Motor neuron (in vitro differentiated cells): ENCODE measurements at regions of chr14 and their contacts with region 1.

Region 1: GRCh38 chr14:61456720-61457119 is 135.3 kb downstream of the PRKCH start:
- ATAC-seq: peak in 7 of 8 experiments; percentile 38 to 94 (median 53)
- H3K4me3 ChIP-seq: no peak overlapping the region
- H3K27ac ChIP-seq: no peak overlapping the region
- H3K4me1 ChIP-seq: no peaks in the 10 kb centered on the region

Region 2: GRCh38 chr14:61308198-61308597 is 148.5 kb before region 1 on chr14:
- in situ Hi-C with region 1: loop called in 2 of 9 experiments (anchors 10 kb)
- ATAC-seq: no peak
- H3K4me3 ChIP-seq: no peak overlapping the region
- H3K27ac ChIP-seq: no peak overlapping the region
- H3K4me1 ChIP-seq: no peaks in the 10 kb centered on the region

Region 3: DNA sequence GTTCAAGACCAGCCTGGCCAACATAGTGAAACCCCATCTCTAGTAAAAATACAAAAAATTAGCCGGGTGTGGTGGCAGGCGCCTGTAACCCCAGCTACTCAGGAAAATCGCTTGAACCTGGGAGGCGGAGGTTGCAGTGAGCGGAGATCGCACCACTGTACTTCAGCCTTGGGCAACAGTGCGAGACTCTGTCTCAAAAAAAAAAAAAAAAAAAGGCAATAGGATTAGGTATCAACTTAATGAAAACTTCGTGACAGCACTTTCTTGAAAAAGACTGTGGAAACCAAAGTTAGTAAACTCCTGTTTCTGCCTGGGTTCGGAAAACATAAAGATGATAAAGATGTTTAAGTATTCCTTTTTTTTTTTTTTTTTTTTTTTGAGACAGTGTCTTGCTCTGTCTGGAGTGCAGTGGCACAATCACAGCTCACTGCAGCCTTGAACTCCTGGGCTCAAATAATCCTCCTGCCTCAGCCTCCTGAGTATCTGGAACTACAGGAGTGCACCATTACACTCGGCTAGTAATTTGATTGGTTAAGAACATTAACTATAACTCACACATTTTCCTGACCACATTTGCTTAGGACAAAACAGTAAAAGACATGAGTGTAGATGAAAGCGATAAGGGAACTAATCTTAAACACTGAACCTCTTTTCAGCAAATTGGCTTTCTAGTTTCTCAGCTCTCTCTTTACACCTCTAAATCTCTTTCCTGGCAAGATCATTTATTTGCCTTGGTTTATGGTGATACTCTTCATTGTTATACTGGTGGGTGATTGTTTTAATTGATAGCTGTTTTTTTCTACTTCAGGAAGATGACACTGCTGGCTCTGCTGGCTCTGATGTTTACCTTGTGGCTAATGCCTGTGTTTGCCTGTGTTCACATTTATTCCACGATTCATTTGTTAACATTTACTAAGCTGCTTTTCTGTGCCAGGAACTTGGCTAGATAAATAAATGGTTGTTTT is 254.4 kb after region 1 on chr14:
- in situ Hi-C with region 1: loop called in 1 of 9 experiments (anchors 25 kb)
- ATAC-seq: peak in 3 of 8 experiments; percentile 26 to 91 (median 44)
- H3K4me3 ChIP-seq: no peak overlapping the region
- H3K27ac ChIP-seq: no peak overlapping the region
- H3K4me1 ChIP-seq: peaks cover 0 to 5% of the 10 kb centered on the region in 2 donors

Region 4: GRCh38 chr14:61730756-61731373 is 274.1 kb after region 1 on chr14:
- in situ Hi-C with region 1: loop called in 5 of 9 experiments (anchors 25 kb)
- ATAC-seq: no peak
- H3K4me3 ChIP-seq: no peak overlapping the region
- H3K27ac ChIP-seq: no peak overlapping the region
- H3K4me1 ChIP-seq: no peaks in the 10 kb centered on the region

Region 5: DNA sequence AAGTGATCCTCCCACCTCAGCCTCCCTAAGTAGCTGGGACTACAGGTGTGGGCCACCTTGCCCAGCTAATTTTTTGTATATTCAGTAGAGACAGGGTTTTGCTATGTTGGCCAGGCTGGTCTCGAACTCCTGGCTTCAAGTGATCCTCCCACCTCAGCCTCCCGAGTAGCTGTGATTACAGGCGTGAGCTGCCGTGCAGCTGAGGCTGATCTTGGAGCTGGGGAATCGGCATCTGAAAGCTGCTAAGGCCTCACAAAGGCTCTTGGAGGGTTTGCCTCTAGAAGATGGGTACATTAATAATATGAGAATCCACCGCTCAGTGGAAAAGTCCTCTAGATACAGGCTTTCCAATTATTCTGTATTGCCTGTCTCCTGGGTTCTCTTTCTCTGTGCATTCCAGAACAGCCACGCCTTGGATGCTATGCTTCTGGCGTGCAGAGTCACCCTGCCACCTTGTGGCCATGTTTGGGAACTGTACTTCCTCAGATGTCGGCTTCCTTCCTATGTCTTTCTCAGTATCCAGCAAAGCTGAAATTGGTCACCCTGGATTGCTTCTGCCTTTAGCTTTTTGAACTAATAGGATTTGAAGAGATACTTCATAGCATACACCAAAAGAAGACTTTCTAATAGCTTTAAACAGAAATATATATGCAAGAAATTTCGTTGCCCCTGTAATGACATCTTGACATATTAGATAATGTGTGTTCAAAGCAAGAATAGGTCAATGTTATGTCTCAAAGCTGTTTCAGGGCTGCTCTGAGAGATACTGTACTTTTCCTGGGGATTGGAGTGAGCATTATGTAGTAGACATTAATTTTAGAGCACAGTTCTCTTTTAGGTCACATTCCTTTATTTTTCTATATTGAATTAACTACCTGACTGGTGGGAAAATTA is 380.9 kb after region 1 on chr14:
- in situ Hi-C with region 1: loop called (anchors 10 to 25 kb)
- ATAC-seq: peak; percentile 79 to 98 (median 92)
- H3K4me3 ChIP-seq: no peak overlapping the region
- H3K27ac ChIP-seq: no peak overlapping the region
- H3K4me1 ChIP-seq: no peaks in the 10 kb centered on the region

Region 6: DNA sequence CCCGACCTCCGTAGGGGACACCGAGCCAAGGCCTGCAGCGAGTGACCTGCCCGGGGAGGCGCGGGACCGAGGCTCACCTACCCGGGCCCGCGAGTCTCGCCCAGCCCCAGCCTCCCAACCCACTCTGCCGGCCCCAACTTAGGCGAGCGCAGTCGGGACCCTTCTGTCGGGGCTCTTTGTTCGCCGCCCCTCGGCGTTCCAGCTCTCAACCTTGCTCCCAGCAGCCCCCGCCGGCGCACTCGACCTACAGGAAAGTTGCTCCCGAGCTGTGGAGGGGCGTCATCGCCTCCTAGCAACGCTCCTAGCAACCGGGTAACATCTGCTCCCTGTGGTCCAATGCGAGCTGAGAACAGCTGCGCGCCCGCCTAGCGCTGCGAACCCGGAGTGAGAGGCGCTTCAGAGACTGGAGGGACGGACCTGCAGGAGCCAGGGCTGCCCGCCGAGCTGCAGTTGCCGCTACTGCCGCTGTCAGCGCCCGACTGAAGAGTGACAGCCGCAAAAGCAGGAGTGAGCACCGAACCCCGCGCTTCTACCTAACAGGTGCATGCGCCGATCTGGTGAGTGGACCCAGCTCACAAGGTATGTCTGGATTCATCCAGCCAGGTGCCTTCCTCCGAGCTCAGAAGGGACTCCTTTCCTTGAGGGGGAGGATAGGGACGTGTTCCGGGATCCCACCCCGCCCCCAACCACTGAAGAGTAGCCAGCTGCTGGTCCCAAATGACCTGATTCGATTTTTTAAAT is 660.5 kb after region 1 on chr14:
- in situ Hi-C with region 1: loop called in 1 of 9 experiments (anchors 25 kb)
- ATAC-seq: peak; percentile 93 to 100 (median 100)
- H3K4me3 ChIP-seq: peak overlapping the region; percentile 32 to 60 (median 41)
- H3K27ac ChIP-seq: no peak overlapping the region
- H3K4me1 ChIP-seq: peaks cover 0 to 4% of the 10 kb centered on the region in 2 donors

Region 7: DNA sequence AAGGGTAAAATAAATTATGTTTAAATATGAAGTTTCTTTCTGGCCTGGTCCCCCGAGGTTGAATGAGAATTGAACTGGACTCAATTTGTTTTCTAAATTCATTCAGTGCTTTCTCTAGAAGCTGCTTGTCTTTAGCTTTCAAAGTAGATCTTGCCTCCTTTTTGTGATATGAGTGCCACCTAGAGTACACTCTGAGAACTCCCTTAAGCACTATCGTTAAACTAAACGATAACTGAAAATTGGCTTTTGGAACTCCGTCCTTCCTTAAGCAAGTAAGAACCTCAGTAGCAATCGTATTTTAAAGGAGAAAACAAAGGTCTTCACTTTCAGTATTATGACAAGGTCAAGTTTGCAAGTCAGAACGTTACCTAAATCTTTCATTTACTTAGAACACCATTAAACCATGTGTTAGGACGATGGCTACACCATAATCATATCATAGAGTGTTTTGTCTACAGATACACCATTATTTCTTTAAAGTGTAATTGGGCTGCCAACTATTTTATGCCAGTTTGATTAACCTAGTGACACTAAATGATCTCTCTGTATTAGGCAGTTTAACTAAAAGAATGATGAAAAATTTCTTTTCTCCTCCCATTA is 670.3 kb after region 1 on chr14:
- in situ Hi-C with region 1: loop called in 4 of 9 experiments (anchors 25 kb)
- ATAC-seq: peak; percentile 56 to 80 (median 63)
- H3K4me3 ChIP-seq: no peak overlapping the region
- H3K27ac ChIP-seq: no peak overlapping the region
- H3K4me1 ChIP-seq: no peaks in the 10 kb centered on the region